ENCODE measurements at regions of chr19 and their contacts with region 1.

Region 1: GRCh38 chr19:52269338-52270261 is at the start of gene ZNF766:
- DNase-seq: peak; percentile 95
- H3K4me3 Mint-ChIP-seq: peak within 1 kb of the TSS; percentile 98
- H3K27ac Mint-ChIP-seq: peak within 1 kb of the TSS; percentile 95
- H3K4me1 Mint-ChIP-seq: peaks cover 11% of the 10 kb centered on the region
- H3K27me3 Mint-ChIP-seq: no peaks in the 10 kb centered on the region
- total RNA-seq, gene ZNF766: 15.9 and 18.2 TPM in 2 replicates

Region 2: GRCh38 chr19:52139252-52140031 is 130.2 kb before region 1 on chr19 and contains the start of gene ZNF616:
- intact Hi-C with region 1: loop called (anchors 1 kb)
- DNase-seq: peak; percentile 93
- H3K4me3 Mint-ChIP-seq: peak within 1 kb of the TSS; percentile 93
- H3K27ac Mint-ChIP-seq: peak within 1 kb of the TSS; percentile 91
- H3K4me1 Mint-ChIP-seq: peaks cover 16% of the 10 kb centered on the region
- H3K27me3 Mint-ChIP-seq: no peaks in the 10 kb centered on the region
- total RNA-seq, gene ZNF616: 6.6 and 8.5 TPM in 2 replicates

Region 3: GRCh38 chr19:52296773-52297600 is 27.4 kb after region 1 on chr19 and contains the start of gene ZNF480:
- intact Hi-C with region 1: loop called (anchors 1 kb)
- DNase-seq: peak; percentile 74
- H3K4me3 Mint-ChIP-seq: peak within 1 kb of the TSS; percentile 89
- H3K27ac Mint-ChIP-seq: peak within 1 kb of the TSS; percentile 94
- H3K4me1 Mint-ChIP-seq: peaks cover 14% of the 10 kb centered on the region
- H3K27me3 Mint-ChIP-seq: peaks cover 2% of the 10 kb centered on the region
- total RNA-seq, gene ZNF480: 3.2 and 3.6 TPM in 2 replicates

Region 4: DNA sequence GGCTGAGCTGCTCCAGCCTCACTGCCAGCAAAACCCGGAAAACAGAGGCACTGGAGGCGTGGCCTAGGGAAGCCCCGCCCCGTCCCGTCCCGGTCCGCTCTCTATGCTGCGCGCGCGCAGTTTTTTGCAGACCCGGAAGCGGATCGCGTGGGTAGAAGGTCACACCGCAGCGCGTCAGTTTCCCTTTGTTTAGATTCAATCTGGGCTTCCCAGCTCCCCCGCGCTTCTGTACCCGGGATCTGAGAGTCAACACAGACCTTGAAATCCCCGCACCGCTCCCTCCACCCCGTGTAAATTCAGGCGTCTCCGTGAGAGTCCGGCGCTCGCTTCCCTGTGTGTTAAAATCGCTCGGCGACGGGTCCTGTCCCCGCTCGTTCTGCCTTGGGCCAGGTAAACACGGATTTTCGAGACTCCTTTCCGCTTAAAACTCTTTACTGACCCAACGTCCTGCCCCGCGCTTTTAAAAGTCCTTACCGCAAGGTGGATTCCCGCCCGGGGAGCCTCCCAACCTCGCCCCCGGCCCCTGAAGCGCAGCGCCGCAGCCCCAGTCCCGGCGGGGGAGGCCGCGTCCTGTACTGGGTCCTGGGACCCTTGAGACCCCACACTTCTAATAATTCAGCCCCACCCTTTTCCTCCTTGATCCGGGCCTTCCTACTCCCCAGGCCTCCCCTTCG is 66.7 kb after region 1 on chr19 and contains the start of gene ZNF610:
- intact Hi-C with region 1: loop called (anchors 1 kb)
- DNase-seq: peak; percentile 82
- H3K4me3 Mint-ChIP-seq: peak within 1 kb of the TSS; percentile 91
- H3K27ac Mint-ChIP-seq: peak within 1 kb of the TSS; percentile 92
- H3K4me1 Mint-ChIP-seq: peaks cover 8% of the 10 kb centered on the region
- H3K27me3 Mint-ChIP-seq: no peaks in the 10 kb centered on the region
- total RNA-seq, gene ZNF610: 0.50 and 1.1 TPM in 2 replicates

Measured in activated T-helper 2 cell treated with anti-CD3 and anti-CD28 coated beads, Interferon-gamma antibody, Interleukin-2, Interleukin-4, amounts not matched to agents 10 μg/mL and 5 μg/mL and 100 μg/mL, durations not matched to agents 14 hours and 24 hours and 36 hours (primary cell).